Activated B cell treated with CpG ODN at 0.5 μM for 24 hours (primary cell): ENCODE measurements at regions of chr3 and their contacts with region 1.

Region 1: GRCh38 chr3:6204891-6205290 is 656.0 kb upstream of the GRM7 start:
- DNase-seq: no peak
- ATAC-seq: no peak
- H3K4me3 Mint-ChIP-seq: no peak overlapping the region
- H3K27ac Mint-ChIP-seq: no peak overlapping the region
- H3K4me1 Mint-ChIP-seq: no peaks in the 10 kb centered on the region
- H3K27me3 Mint-ChIP-seq: peaks cover 5% of the 10 kb centered on the region
- CTCF ChIP-seq: no peak

Region 2: DNA sequence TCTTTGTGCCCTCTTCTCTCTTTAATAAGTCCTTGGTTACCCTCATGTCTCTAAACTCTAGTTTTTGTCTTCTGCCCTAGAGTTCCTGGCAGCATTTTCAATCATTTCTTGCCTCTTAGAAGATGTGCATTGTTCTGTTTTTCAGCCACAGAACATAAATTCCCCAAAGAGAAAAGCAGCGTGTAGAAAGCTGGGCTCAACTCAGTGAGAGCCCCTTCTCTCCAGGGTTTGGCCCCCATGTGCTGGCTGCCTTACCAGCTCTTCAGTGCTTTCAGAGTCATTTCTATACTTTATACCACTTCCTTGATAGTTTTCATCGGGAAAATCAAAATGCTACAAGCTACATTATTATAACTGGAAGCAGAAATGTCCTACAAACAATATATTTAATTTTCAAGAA is 286.9 kb after region 1 on chr3:
- CTCF ChIA-PET with region 1: no interaction called
- POLR2A ChIA-PET with region 1: no interaction called
- intact Hi-C with region 1: no loop called
- DNase-seq: no peak
- ATAC-seq: no peak
- H3K4me3 Mint-ChIP-seq: no peak overlapping the region
- H3K27ac Mint-ChIP-seq: no peak overlapping the region
- H3K4me1 Mint-ChIP-seq: no peaks in the 10 kb centered on the region
- H3K27me3 Mint-ChIP-seq: no peaks in the 10 kb centered on the region
- CTCF ChIP-seq: no peak

Region 3: DNA sequence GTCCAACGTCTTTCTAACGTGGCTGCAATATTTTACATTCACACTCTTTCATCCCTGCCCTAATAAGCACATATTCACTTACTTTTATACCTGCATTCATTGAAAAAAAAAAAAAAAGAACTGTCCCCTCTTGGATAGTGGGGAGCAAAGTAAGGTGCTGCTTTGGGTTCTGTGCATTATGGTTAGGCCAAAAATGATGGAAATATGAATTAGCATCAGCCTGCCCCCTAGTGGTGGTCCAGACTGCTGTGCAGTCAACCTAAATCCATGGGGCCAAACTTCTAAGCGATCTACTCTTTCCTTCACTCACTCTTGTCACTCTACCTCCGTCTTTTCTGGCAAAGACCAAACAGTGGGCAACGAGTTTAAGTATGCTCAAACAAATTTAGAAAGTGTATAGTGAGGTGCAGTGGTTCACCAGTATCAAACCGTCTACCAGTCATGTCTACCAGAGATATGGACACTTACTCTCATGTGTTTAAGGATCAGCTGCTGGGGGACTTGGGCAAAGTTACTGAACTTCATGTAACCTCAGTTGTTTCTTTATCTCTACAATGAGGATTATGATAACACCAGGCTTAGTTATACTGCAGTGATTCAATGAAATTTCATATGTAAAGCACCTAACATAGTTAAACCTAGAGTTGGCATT is 594.5 kb after region 1 on chr3:
- CTCF ChIA-PET with region 1: interaction called, 14 read pairs
- POLR2A ChIA-PET with region 1: no interaction called
- intact Hi-C with region 1: loop called (anchors 1 kb)
- DNase-seq: no peak
- ATAC-seq: no peak
- H3K4me3 Mint-ChIP-seq: no peak overlapping the region
- H3K27ac Mint-ChIP-seq: no peak overlapping the region
- H3K4me1 Mint-ChIP-seq: no peaks in the 10 kb centered on the region
- H3K27me3 Mint-ChIP-seq: peaks cover 2% of the 10 kb centered on the region
- CTCF ChIP-seq: peak; percentile 64

Region 4: DNA sequence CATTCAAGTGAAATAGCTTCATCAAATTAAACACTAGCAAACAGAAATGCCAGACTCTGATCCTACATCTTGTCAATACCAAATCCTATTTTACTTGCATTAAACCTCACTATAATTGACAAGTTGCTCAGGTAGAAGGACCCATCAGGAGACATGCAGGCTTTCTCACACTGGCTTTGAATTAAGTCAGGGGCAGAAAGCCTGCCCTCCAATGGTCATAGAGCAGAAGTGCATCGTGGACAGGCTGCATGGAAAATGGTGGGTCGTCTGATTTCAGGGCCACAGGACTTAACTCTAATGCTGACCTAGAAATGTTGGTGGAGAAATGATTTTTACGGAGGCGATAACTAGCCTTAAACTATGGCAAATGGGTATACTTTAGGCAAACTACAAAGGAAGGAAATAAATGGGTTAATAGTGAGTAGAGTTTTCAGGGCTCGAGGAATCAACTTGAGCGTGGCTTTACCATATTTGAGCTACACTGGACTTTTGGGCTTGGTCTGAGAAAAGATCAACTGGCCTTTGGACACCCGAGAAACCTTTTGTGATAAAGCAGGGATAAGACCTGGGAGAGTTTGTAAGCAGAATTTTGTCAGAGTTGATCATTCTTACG is 939.9 kb after region 1 on chr3:
- CTCF ChIA-PET with region 1: no interaction called
- POLR2A ChIA-PET with region 1: no interaction called
- intact Hi-C with region 1: loop called (anchors 10 kb)
- DNase-seq: no peak
- ATAC-seq: no peak
- H3K4me3 Mint-ChIP-seq: no peak overlapping the region
- H3K27ac Mint-ChIP-seq: no peak overlapping the region
- H3K4me1 Mint-ChIP-seq: no peaks in the 10 kb centered on the region
- H3K27me3 Mint-ChIP-seq: no peaks in the 10 kb centered on the region
- CTCF ChIP-seq: no peak